Activated CD4-positive, alpha-beta T cell treated with anti-CD3 and anti-CD28 coated beads for 36 hours (primary cell): ENCODE measurements at regions of chr18 and their contacts with region 1.

Region 1: GRCh38 chr18:3012964-3013804 is at the start of gene LPIN2:
- DNase-seq: peak; percentile 98
- ATAC-seq: peak; percentile 96
- H3K4me3 Mint-ChIP-seq: peak within 1 kb of the TSS; percentile 95
- H3K27ac Mint-ChIP-seq: peak within 1 kb of the TSS; percentile 94
- H3K4me1 Mint-ChIP-seq: peaks cover 66% of the 10 kb centered on the region
- H3K27me3 Mint-ChIP-seq: no peaks in the 10 kb centered on the region
- total RNA-seq, gene LPIN2: 82.6 to 95.3 TPM

Region 2: DNA sequence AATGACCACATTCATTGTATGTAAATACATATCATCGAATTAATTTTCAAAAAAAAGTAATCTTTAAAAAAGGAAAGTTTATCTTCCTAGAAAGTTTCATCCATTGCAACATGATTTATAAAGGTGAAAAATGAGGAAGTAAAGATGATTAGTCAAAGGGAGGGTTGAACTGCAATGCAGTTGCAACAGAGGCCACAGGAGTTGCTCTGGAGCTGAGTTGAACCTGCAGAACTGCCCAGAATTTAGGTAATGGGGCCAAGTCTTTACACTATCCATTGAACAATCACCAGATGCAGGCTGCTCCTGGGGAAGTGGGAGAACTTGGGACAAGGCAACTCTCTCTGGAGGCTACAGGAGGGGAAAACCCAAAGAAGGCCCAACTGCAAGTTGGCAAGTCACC is 832.6 kb before region 1 on chr18:
- CTCF ChIA-PET with region 1: no interaction called
- POLR2A ChIA-PET with region 1: no interaction called
- intact Hi-C with region 1: no loop called
- DNase-seq: no peak
- ATAC-seq: no peak
- H3K4me3 Mint-ChIP-seq: no peak overlapping the region
- H3K27ac Mint-ChIP-seq: no peak overlapping the region
- H3K4me1 Mint-ChIP-seq: no peaks in the 10 kb centered on the region
- H3K27me3 Mint-ChIP-seq: peaks cover 5% of the 10 kb centered on the region

Region 3: GRCh38 chr18:3029215-3029952 is 16.2 kb after region 1 on chr18:
- CTCF ChIA-PET with region 1: no interaction called
- POLR2A ChIA-PET with region 1: no interaction called
- intact Hi-C with region 1: no loop called
- DNase-seq: no peak
- ATAC-seq: no peak
- H3K4me3 Mint-ChIP-seq: no peak overlapping the region
- H3K27ac Mint-ChIP-seq: no peak overlapping the region
- H3K4me1 Mint-ChIP-seq: no peaks in the 10 kb centered on the region
- H3K27me3 Mint-ChIP-seq: no peaks in the 10 kb centered on the region

Region 4: GRCh38 chr18:3095921-3096320 is 82.7 kb after region 1 on chr18:
- CTCF ChIA-PET with region 1: no interaction called
- POLR2A ChIA-PET with region 1: no interaction called
- intact Hi-C with region 1: no loop called
- DNase-seq: no peak
- ATAC-seq: no peak
- H3K4me3 Mint-ChIP-seq: no peak overlapping the region
- H3K27ac Mint-ChIP-seq: no peak overlapping the region
- H3K4me1 Mint-ChIP-seq: peaks cover 13% of the 10 kb centered on the region
- H3K27me3 Mint-ChIP-seq: no peaks in the 10 kb centered on the region

Region 5: GRCh38 chr18:3261371-3262246 is 248.4 kb after region 1 on chr18 and contains the start of gene MYL12B:
- CTCF ChIA-PET with region 1: no interaction called
- POLR2A ChIA-PET with region 1: no interaction called
- intact Hi-C with region 1: loop called in 1 of 2 experiments (anchors 1 kb)
- DNase-seq: peak; percentile 88
- ATAC-seq: peak; percentile 77
- H3K4me3 Mint-ChIP-seq: peak within 1 kb of the TSS; percentile 88
- H3K27ac Mint-ChIP-seq: peak within 1 kb of the TSS; percentile 96
- H3K4me1 Mint-ChIP-seq: peaks cover 59% of the 10 kb centered on the region
- H3K27me3 Mint-ChIP-seq: no peaks in the 10 kb centered on the region
- total RNA-seq, gene MYL12B: 282 to 301 TPM